Cardiac septum (tissue), 1 donor: ENCODE measurements at regions of chr17 and their contacts with region 1.

Region 1: DNA sequence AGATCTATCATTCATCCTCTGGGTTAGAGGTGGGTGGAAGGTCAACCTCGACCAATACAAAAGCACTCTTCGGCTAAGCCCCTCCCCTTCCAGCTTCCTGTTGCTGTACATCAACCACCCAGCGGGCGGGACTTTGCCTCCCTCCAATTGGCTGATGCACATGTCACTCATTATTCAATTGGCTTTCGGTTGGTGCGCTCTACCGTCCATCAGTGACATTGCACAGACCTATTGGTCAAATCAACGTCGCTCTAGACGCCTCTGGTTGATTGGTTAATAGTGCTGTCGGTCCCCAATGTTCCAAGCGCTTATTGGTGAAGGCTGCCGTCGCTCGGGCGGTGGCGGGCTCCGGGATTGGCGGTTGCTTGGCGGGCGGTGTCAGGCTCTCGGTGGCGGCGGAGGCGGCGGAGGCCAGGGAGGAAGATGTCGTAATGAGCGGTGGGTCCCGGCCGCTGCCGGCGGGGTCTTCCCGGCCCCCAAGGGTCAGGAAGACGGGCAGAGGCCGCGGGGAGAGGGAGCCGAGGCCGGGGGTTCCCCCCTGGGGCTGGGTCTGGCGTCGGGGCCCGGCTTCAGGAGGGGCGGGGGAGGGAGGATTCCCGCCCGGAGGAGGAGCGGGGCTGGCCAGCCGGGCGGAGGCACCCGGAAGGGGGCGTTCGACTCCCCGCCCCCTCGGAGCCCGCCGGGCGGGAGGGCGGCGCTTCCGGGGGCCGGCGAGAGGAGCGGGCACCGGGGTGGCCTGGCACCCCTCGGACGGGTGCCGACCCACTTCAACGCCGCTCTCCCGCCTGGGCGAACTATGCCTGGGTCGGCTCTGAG is at the start of gene SP2:
- DNase-seq: peak; percentile 98
- total RNA-seq, gene SP2: 16.3 TPM

Region 2: DNA sequence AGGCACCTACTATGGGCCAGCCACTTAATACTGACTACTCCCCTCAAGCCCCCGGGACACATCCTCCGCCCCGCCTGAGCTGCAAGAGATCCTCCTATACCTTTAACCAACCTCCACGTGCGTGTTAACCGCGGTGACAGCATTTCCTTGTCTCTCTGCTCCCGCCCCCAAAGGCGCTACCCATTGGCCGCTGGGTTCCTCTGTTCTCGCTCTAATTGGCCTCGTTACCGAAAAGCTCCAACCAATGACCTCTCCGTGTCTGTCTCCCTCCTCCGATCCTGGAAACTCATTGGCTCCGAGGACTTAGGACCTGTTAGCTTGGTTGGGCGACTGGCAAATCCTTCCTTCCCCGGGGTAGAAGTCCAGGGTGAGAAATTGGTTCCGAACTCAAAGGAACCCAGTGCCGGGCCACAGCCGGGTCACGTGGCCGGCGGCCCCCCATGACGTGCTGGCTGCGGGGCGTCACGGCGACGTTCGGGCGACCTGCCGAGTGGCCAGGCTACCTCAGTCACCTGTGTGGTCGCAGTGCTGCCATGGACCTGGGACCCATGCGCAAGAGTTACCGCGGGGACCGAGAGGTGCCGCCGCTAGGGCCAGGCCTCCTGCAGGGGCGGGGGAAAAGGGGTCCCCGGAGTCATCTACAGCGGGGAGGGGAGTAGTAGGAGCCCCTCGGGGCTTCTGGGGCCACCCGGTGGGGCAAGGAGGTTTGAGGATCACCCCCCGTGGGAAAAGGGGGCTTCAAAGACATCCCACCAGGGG is 45.4 kb after region 1 on chr17 and contains the start of gene PNPO:
- intact Hi-C with region 1: loop called (anchors 1 kb)
- DNase-seq: peak; percentile 97
- total RNA-seq, gene PNPO: 21.3 TPM